ENCODE measurements at regions of chr2 and their contacts with region 1.

Region 1: DNA sequence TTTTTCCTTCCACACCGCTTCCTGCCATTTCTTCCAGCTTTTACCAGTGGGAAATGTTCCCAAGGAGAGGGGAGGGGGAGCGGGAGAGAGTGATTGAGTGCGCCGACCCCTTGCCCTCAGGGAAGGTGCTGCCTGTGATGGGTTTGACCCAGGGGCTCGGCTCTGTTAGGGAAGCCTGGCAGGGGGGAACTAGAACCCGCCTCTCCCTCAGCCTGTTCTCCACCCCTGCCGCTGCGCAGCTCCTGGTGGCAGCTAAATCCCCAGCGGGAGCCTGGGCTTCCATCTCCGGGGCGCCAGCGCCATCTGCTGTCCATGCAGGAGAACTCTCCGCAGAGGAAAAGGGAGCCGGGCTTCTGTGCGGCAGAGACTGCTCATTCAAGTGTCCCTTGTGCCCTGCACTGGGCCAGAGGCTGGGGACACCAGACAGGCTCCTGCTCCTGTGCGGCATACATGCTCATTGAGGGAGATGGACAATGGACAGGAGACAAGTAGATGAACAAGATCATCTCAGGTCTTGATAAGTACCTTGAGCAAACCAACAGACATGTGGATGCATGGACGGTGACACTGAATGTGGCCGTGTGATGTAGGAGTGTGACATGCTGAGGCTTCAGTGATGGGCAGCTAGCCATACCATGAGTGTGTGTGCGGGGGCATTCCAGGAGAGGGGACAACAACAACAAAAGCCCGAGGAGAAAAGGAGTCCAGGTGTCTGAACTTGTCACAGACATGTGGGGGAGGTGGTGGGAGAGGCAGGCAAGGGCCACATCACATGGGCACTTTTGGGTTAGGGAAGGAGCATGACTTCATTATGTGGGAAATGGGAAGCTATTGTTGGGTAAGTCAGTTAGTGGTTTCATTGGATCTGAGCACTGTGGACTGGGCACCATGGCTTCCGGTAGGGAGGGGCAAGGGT is 13.3 kb downstream of the CHPF start:
- DNase-seq: peak; percentile 86 to 93
- H3K4me3 ChIP-seq: no peak overlapping the region
- H3K4me3 Mint-ChIP-seq: no peak overlapping the region
- H3K27ac Mint-ChIP-seq: no peak overlapping the region
- H3K4me1 ChIP-seq: peaks cover 10% of the 10 kb centered on the region
- H3K4me1 Mint-ChIP-seq: peaks cover 21% of the 10 kb centered on the region
- H3K27me3 ChIP-seq: no peaks in the 10 kb centered on the region; the same call in 1 of the 2 replicates
- H3K27me3 Mint-ChIP-seq: peaks cover 25% of the 10 kb centered on the region
- CTCF ChIP-seq: peak; percentile 95 to 97

Region 2: DNA sequence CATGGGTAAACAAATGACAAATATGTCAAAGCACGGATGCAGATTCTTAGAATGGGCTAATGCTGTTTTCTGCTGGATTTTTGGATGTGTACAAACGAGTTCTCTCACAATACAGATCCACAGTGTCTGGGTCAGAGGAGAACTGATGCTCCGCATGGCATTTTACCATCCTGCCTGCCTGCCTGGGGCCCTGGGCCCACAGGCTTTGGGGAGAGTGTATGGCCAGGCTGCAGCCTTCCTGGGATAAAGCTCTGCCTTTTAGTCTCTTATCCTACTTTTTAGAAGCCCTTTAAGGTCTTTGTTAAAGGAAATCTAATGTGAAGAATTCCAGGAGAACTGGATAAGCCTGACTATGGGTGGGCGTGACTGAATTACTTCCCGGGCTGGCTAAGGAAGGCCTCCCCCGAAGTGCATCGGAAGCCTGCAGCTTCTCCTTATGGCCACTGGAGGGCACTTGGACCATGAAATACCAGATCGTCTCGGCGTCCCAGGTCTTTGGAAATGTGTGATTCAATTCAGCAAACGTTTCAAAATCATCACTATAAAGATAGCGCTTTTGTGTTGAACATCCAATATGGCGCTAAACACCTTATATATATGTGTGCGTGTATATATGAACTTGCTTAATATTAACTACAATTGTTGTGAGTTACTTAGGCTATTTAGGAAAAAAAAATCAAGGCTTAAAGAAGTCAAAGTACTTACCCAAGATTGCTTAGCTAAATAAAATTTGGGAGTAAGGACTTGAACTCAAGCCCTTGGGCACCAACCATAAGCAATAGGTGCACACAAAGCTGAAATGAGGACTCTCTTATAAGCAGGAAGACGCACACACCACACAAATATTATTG is 127.4 kb before region 1 on chr2:
- CTCF ChIA-PET with region 1: interaction called, 36 read pairs
- POLR2A ChIA-PET with region 1: no interaction called
- intact Hi-C with region 1: loop called (anchors 1 kb)
- DNase-seq: peak; percentile 78 to 80
- H3K4me3 ChIP-seq: no peak overlapping the region
- H3K4me3 Mint-ChIP-seq: no peak overlapping the region
- H3K27ac Mint-ChIP-seq: no peak overlapping the region
- H3K4me1 ChIP-seq: peaks cover 28% of the 10 kb centered on the region
- H3K4me1 Mint-ChIP-seq: peaks cover 28% of the 10 kb centered on the region
- H3K27me3 ChIP-seq: no peaks in the 10 kb centered on the region
- H3K27me3 Mint-ChIP-seq: no peaks in the 10 kb centered on the region
- CTCF ChIP-seq: peak; percentile 82 to 95

Region 3: DNA sequence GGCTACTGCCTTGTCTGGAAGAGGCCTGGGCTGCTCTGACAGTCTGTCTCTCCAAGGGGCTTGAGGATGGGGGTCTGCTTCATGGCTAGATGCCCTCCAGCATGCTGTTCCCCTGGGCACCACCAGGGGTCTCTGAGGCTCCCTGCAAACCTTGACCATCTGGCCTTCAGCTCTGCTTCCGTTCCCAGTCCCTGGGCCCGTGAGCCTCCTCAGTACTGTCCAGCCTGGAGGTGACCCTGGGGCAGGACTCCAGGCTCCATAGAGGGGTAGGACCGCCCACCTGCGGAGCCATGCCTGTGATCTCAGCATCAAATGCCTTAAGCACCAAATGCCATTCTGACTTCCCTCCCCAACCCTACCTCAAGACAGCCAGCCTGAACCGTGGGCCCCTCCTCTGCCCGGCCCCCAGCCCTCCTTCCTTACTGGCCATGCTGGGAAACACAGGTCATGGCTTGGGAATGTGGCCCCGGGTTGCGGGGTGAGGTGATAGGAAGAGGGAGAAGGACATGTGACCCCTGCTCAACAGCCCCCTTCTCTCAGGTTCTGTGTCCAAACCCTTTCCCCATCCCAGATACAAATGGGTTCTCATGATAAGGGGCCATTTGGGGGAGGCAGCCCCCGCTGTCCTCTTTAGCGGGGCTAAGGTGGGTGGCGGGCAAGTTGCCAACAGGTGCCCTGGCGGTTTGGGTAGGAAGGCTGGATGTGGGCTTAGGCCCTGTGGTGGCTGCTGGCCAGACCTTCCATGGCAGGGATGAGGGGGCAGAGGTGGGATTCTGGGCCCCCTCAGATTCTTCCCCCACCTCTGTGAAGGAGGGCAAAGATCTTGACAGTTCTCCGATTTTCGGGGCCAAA is 70.6 kb before region 1 on chr2:
- CTCF ChIA-PET with region 1: interaction called, 59 read pairs
- POLR2A ChIA-PET with region 1: no interaction called
- intact Hi-C with region 1: loop called (anchors 1 kb)
- DNase-seq: peak; percentile 70 to 73
- H3K4me3 ChIP-seq: no peak overlapping the region
- H3K4me3 Mint-ChIP-seq: no peak overlapping the region
- H3K27ac Mint-ChIP-seq: no peak overlapping the region
- H3K4me1 ChIP-seq: 0 out of 2 replicates have a peak, but pooled peaks cover 4% of the 10 kb centered on the region
- H3K4me1 Mint-ChIP-seq: peaks cover 7% of the 10 kb centered on the region
- H3K27me3 ChIP-seq: no peaks in the 10 kb centered on the region
- H3K27me3 Mint-ChIP-seq: no peaks in the 10 kb centered on the region
- CTCF ChIP-seq: peak; percentile 87 to 93

Region 4: GRCh38 chr2:219484343-219485200 is 45.7 kb before region 1 on chr2:
- CTCF ChIA-PET with region 1: interaction called, 15 read pairs
- POLR2A ChIA-PET with region 1: no interaction called
- intact Hi-C with region 1: no loop called
- DNase-seq: no peak
- H3K4me3 ChIP-seq: peak overlapping the region; percentile 16
- H3K4me3 Mint-ChIP-seq: peak overlapping the region; percentile 49
- H3K27ac Mint-ChIP-seq: no peak overlapping the region
- H3K4me1 ChIP-seq: peaks cover 11% of the 10 kb centered on the region; the same call in 1 of the 2 replicates
- H3K4me1 Mint-ChIP-seq: no peaks in the 10 kb centered on the region
- H3K27me3 ChIP-seq: peaks cover 3% of the 10 kb centered on the region
- H3K27me3 Mint-ChIP-seq: peaks cover 8% of the 10 kb centered on the region
- CTCF ChIP-seq: no peak

Region 5: DNA sequence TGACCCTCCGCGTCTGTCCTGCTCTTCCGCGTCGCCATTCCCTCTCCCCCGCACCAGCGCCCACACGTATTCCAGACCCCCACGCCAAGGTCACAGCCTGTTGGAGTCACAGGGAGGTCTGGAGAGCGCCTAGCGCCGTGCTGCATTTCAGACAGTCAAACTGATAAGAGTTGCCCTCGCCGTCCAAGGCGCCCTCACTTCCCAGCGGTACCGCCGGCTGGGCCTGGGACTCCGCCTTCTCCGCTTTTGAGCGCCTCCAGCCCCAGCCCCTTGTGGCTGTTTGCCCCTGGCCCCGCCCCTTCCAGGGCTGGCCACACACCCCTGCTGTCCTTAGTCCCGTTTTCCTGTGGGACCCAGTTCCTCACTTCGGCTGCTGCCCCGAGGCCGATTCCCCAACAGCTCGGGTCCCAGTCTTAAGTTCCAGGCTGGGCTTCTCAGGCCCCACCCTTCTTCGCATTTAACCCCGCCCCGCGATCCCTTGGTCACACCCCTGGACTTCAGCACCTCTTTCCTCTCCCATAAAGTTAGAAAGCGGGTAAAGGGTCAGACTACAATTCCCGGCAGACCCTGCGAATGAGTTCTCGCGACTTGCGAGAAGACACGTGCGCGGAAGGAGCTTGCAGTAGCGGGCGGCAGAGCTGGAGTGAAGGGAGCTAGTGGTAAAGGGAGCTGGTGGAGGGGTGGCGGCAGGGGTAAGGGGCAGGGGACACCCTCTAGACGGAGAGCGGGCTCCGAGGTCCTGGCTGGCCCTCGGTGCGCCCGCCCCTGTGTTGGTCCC is 31.8 kb before region 1 on chr2 and contains the start of gene GMPPA:
- CTCF ChIA-PET with region 1: interaction called, 243 read pairs
- POLR2A ChIA-PET with region 1: interaction called, 4 read pairs
- intact Hi-C with region 1: loop called (anchors 1 kb)
- DNase-seq: peak; percentile 98 to 99
- H3K4me3 ChIP-seq: peak within 1 kb of the TSS; percentile 86
- H3K4me3 Mint-ChIP-seq: peak within 1 kb of the TSS; percentile 98
- H3K27ac Mint-ChIP-seq: peak within 1 kb of the TSS; percentile 94
- H3K4me1 ChIP-seq: peaks cover 14% of the 10 kb centered on the region; the same call in 1 of the 2 replicates
- H3K4me1 Mint-ChIP-seq: peaks cover 16% of the 10 kb centered on the region
- H3K27me3 ChIP-seq: no peaks in the 10 kb centered on the region
- H3K27me3 Mint-ChIP-seq: peaks cover under 1% of the 10 kb centered on the region
- CTCF ChIP-seq: no peak
- total RNA-seq, gene GMPPA: 51.0 and 53.7 TPM in 2 replicates

Region 6: GRCh38 chr2:219543601-219544358 is 13.5 kb after region 1 on chr2 and contains the starts of genes CHPF and TMEM198:
- CTCF ChIA-PET with region 1: interaction called, 10 read pairs
- POLR2A ChIA-PET with region 1: no interaction called
- intact Hi-C with region 1: no loop called
- DNase-seq: peak; percentile 99
- H3K4me3 ChIP-seq: peak within 1 kb of the TSS; percentile 92
- H3K4me3 Mint-ChIP-seq: peak within 1 kb of the TSS; percentile 92
- H3K27ac Mint-ChIP-seq: peak within 1 kb of the TSS; percentile 87
- H3K4me1 ChIP-seq: peaks cover 19% of the 10 kb centered on the region
- H3K4me1 Mint-ChIP-seq: peaks cover 7% of the 10 kb centered on the region
- H3K27me3 ChIP-seq: no peaks in the 10 kb centered on the region
- H3K27me3 Mint-ChIP-seq: no peaks in the 10 kb centered on the region
- CTCF ChIP-seq: no peak
- total RNA-seq, gene CHPF: 26.4 and 27.3 TPM in 2 replicates
- total RNA-seq, gene TMEM198: 8.5 and 9.1 TPM in 2 replicates